Mammary epithelial cell (primary cell): ENCODE measurements at regions of chr6 and their contacts with region 1.

Region 1: DNA sequence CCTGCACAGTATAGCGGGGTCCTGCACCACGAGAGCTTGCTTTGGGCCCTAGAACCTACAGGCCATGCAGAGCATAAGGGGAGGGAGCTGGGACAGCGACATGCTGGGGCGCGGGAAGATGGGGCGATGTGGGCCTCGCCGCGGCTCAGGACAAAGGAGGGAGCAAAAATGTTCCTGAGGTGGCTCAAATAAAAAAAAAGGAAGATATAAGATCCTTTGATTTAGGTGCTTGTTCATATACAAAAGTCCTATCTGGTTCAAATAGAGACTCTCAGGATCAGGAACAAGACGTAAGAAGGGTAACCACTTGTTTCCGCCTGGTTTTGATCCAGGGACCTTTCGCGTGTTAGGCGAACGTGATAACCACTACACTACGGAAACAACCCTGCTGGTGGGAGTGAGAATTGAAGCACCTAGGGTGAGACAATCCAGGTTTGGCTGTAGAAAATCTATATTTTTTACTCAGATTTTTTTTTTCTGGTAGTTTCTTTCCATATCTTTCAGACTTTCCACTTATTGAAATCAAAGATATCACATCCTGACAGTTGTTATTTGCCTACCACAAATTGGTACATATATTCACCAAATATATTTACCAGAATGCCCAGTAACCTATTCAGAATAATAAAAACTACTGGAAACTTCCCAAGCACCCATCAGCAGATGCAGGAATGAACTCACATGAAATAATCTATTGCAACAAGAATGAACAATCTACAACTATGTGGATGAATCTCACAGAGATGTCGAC is 177.9 kb upstream of the ZNF184 start:
- DNase-seq: peak; percentile 74
- H3K4me3 ChIP-seq: peak overlapping the region; percentile 15 to 47 (median 47)
- H3K27ac ChIP-seq: no peak overlapping the region
- H3K4me1 ChIP-seq: peaks cover 2% of the 10 kb centered on the region
- H3K27me3 ChIP-seq: no peaks in the 10 kb centered on the region
- CTCF ChIP-seq: peak; percentile 32 to 54

Region 2: DNA sequence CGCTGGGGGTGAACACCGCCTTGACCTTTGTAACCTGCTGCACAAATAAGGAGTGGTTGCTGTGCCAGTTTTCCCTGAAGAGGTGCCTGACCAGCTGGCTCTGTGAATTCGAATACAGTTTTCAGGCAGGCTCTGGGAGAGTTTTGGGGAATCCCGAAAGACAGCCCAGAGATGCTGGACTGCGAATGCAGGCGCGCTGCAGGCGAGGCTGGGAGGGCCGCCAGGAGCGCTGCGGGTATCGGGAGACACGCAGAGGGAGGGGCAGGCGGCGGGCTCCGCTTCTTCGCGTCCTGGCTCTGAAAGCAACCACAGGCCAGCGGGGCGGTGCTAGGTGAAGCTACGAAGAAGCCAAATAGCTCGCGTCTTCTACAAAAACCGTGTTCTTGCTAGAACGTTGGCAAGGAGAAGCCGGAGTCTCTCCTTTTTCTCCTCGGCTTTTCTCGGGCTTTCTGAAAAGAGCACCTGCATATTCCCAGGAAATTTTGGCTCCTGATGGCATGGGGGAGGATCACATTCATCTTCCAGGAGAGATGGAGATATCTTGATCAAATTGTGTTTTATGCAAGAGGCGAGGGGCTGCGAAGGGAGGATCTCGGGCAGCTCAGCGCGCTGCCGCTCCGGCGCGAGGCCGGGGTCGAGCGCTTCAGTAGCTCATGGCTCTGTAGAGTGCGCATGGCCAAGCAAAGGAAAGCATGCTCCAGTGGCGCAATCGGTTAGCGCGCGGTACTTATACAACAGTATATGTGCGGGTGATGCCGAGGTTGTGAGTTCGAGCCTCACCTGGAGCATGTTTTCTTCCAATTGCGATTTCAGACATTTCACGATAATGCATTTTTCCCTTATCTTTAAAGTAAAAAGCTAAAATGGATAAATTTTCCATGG is 19.8 kb before region 1 on chr6:
- CTCF ChIA-PET with region 1: no interaction called
- dilution Hi-C with region 1: no loop called
- in situ Hi-C with region 1: no loop called
- intact Hi-C with region 1: loop called (anchors 1 kb)
- DNase-seq: peak; percentile 79
- H3K4me3 ChIP-seq: peak overlapping the region; percentile 33 to 72 (median 69)
- H3K27ac ChIP-seq: no peak overlapping the region
- H3K4me1 ChIP-seq: no peaks in the 10 kb centered on the region
- H3K27me3 ChIP-seq: no peaks in the 10 kb centered on the region
- CTCF ChIP-seq: peak in 1 of 2 donors; percentile 16

Region 3: DNA sequence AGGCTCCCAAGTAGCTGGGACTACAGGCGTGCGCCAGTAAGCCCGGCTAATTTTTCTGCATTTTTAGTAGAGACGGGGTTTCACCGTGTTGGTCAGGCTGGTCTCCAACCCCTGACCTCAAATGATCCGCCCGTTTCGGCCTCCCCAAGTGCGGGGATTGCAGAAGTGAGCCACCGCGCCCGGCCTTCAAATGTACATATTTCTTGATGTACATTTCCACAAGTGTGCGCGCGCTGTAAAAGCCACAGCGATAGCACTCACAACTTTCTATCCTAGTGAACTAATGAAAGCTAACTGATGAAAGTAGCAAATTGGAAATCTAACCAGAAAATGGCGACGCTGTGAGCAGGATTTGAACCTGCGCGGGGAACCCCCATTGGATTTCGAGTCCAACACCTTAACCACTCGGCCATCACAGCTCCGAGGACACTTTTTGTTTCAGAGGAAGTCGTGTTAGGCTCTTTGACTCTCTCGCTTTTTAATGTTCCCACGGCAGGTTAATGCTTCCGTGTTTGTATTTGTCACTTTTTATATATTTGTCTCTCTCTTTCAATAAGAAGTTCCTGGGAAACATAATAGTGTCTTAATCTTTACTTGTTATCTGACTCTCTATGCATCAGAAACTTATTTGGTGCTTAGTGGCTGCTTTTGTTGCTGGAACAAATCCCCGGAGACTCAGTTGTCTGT is 21.5 kb after region 1 on chr6:
- CTCF ChIA-PET with region 1: no interaction called
- dilution Hi-C with region 1: no loop called
- in situ Hi-C with region 1: no loop called
- intact Hi-C with region 1: loop called (anchors 2 kb)
- DNase-seq: peak; percentile 74
- H3K4me3 ChIP-seq: peak overlapping the region; percentile 32 to 46 (median 41)
- H3K27ac ChIP-seq: no peak overlapping the region
- H3K4me1 ChIP-seq: peaks cover 20% of the 10 kb centered on the region
- H3K27me3 ChIP-seq: no peaks in the 10 kb centered on the region
- CTCF ChIP-seq: no peak

Region 4: DNA sequence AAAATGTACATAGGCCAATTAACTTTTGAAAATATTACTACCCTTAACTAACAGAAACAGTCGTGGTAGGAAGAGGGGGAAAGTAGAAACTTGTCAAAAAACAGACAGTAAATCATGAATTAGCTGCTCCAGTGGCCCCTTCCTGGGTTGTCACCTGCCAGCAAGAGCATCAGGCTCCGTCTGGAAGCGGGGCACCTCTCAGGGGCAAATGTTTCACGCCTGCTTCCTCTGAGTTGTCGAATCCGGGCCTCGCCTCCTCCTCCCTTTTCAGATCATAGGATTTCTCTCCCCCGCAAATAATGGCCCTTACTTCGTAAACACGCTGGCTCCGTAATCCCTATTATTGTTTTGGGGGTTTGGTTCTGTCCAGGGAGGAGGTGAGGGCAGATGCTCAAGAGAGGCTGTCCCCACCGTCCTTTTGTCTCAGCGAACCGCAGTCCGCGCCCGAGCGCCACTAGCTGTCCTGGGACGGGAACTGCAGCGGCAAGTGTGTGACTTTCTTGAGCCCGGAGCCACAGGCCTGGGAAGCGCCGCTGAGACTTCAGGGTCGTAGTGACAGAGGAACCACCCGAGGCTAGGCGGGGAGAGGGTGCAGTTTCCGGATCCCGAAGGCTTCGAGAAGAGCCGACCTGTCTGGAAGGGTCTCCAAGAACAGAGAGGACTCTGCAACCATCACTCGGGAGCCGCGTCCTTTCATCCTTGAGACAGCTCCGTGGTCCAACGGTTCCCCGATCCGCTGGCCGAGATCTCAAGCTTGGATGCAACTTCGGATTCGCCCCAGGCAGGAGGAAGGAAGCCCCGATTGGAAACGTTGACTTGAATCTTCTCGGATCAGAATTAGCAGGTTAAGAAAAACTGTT is 36.6 kb after region 1 on chr6:
- CTCF ChIA-PET with region 1: no interaction called
- dilution Hi-C with region 1: no loop called
- in situ Hi-C with region 1: no loop called
- intact Hi-C with region 1: no loop called
- DNase-seq: peak; percentile 76
- H3K4me3 ChIP-seq: peak overlapping the region; percentile 65 to 67 (median 66)
- H3K27ac ChIP-seq: no peak overlapping the region
- H3K4me1 ChIP-seq: peaks cover 5% of the 10 kb centered on the region
- H3K27me3 ChIP-seq: no peaks in the 10 kb centered on the region
- CTCF ChIP-seq: peak; percentile 72 to 83

Region 5: DNA sequence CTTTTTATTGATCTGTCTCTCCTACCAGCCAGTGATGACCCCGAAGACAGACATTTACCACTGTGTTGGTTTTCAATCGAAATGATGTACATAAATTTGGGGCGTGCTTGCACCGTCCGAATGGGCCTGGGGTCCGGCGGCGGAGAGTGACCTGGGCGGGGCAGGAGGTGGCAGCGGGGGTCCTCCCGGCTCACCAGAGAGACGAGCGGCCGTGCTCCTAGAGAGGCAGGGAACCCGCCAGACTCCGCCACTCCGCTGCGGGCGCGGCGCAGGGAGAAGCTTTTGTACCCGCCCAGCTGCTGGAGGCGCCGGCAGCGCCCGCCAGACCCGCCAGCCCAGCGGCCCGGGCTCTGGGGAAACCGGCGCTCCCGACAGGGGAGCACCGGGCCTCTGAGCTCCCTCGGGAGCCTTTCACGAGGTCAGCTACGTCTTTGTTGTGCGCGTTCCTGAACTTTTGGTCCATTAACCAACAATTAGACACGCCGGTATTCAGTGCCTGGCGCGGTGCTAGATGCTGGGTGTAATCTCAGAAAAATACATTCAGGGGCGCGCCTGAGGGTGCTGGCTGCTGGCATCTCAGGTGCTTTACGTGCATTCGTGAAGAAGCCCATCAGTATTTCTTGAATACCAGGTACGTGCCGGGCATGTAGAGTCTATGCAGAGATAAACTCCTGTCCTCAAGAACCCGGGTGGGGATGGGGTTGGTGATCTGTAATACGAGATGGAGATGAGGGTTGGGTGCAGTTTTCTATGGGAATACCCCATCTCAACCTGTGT is 630.7 kb after region 1 on chr6 and contains the start of gene PGBD1:
- CTCF ChIA-PET with region 1: no interaction called
- dilution Hi-C with region 1: no loop called
- in situ Hi-C with region 1: no loop called
- intact Hi-C with region 1: no loop called
- DNase-seq: peak; percentile 61
- H3K4me3 ChIP-seq: peak within 1 kb of the TSS; percentile 70 to 93 (median 70)
- H3K27ac ChIP-seq: peak within 1 kb of the TSS; percentile 22
- H3K4me1 ChIP-seq: peaks cover 6% of the 10 kb centered on the region
- H3K27me3 ChIP-seq: no peaks in the 10 kb centered on the region
- CTCF ChIP-seq: no peak
- total RNA-seq, gene PGBD1: 5.7 to 7.7 TPM

Region 6: DNA sequence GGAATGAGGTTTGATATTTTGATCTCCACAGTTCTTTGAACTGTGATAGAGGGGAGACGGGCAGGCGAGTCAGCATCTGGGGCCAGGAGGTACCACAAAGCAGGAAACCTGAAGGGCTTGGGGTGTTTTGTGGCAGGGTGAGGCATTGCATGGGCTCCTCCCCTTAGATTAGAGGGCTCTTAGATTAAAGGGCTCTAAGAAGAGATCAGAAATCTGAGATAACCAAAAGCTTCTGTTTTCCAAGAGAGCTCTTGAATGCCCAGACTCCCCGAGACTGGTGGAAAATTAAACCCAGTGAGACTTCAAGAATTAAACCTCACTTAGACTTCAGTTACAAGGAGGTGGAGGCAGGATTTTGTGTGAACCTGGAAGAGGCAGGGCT is 872.4 kb after region 1 on chr6:
- CTCF ChIA-PET with region 1: no interaction called
- dilution Hi-C with region 1: no loop called
- in situ Hi-C with region 1: no loop called
- intact Hi-C with region 1: no loop called
- DNase-seq: no peak
- H3K4me3 ChIP-seq: no peak overlapping the region
- H3K27ac ChIP-seq: no peak overlapping the region
- H3K4me1 ChIP-seq: no peaks in the 10 kb centered on the region
- H3K27me3 ChIP-seq: peaks cover 8% of the 10 kb centered on the region
- CTCF ChIP-seq: no peak